ENCODE measurements at regions of chr5 and their contacts with region 1.

Region 1: DNA sequence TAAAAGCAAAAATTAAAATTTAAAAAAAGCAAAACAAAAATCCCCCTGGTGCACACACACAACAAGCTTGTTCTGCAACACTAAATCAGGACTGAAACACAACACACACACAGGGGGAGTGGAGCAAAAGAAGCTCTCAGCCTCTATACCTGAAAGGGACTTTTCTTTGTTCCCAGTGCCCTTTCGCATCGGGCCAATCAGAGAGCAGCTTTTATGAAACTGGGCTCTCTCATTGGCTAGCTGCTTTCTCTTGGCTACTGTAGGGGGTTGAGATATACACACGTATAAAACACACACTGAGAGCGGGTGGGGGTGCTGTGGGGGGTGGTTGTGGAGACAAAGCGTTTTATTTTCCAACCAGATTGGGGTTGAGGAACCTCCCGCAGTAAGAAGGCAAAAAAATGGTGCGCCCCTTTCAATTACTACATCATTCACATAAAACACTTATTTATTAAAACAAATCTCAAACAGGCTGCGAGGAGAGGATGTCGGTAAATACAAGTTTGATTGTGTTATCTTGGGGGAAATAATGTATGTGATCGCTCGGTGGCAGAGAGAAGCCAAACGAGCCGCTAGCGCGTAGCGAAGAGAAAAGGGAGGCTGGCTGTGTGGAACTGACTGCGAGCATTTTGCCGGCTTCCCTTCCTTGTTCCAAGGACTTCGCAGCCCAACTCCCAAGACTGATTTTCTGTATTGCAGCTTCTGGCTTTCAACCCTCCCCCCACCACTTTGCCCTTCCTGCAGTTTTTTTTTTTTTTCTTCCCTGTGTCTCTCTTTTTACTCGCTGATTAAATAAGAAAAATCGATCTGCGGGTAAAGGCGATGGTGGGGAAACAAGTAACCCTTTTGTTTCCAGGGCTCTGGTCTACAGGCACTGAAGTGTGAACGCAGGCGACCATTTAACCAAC is 2.5 kb upstream of the ZNF608 start:
- DNase-seq: peak; percentile 91
- ATAC-seq: peak; percentile 79
- H3K4me3 ChIP-seq: peak overlapping the region; percentile 67
- H3K27ac ChIP-seq: peak overlapping the region; percentile 86
- H3K4me1 ChIP-seq: no peaks in the 10 kb centered on the region
- H3K27me3 ChIP-seq: no peaks in the 10 kb centered on the region
- CTCF ChIP-seq: no peak
- POLR2A ChIP-seq: no peak
- RAD21 ChIP-seq: 0 out of 2 replicates have a peak, but pooled peaks have one; percentile 10

Region 2: GRCh38 chr5:123671042-123671441 is 1077.9 kb before region 1 on chr5:
- CTCF ChIA-PET with region 1: interaction called, 3 read pairs
- POLR2A ChIA-PET with region 1: no interaction called
- dilution Hi-C with region 1: no loop called
- in situ Hi-C with region 1: no loop called
- intact Hi-C with region 1: loop called (anchors 1 kb)
- DNase-seq: peak; percentile 30
- ATAC-seq: no peak; the same call in 1 of the 2 replicates
- H3K4me3 ChIP-seq: no peak overlapping the region
- H3K27ac ChIP-seq: no peak overlapping the region
- H3K4me1 ChIP-seq: peaks cover 4% of the 10 kb centered on the region
- H3K27me3 ChIP-seq: no peaks in the 10 kb centered on the region
- CTCF ChIP-seq: peak; percentile 85
- POLR2A ChIP-seq: 0 out of 2 replicates have a peak, but pooled peaks have one; percentile 35
- RAD21 ChIP-seq: peak; percentile 93

Region 3: DNA sequence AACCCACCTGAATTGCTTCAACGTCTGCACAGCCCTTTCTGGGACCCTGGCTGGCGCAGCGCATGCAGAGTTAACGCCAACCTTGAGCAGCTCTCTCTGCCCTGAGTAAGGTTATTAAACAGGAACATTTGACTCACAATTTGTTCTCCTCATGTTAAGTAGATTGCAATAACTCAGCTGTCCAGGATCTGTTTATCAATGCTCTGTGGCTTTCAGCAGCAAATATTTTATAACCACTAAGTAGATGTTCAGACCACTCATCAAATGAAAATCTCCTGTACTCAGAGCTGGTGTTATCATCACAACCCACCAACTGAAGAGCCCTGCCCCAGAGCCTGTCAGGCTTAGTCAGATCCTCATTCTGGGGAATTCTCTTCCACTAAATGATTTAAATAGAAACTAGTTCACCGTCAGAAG is 405.5 kb before region 1 on chr5:
- CTCF ChIA-PET with region 1: no interaction called
- POLR2A ChIA-PET with region 1: no interaction called
- dilution Hi-C with region 1: no loop called
- in situ Hi-C with region 1: no loop called
- intact Hi-C with region 1: loop called (anchors 5 kb)
- DNase-seq: peak; percentile 95
- ATAC-seq: peak; percentile 98
- H3K4me3 ChIP-seq: no peak overlapping the region
- H3K27ac ChIP-seq: no peak overlapping the region
- H3K4me1 ChIP-seq: 0 out of 2 replicates have a peak, but pooled peaks cover 2% of the 10 kb centered on the region
- H3K27me3 ChIP-seq: peaks cover 3% of the 10 kb centered on the region; the same call in 1 of the 2 replicates
- CTCF ChIP-seq: no peak
- POLR2A ChIP-seq: no peak
- RAD21 ChIP-seq: peak; percentile 16

Region 4: DNA sequence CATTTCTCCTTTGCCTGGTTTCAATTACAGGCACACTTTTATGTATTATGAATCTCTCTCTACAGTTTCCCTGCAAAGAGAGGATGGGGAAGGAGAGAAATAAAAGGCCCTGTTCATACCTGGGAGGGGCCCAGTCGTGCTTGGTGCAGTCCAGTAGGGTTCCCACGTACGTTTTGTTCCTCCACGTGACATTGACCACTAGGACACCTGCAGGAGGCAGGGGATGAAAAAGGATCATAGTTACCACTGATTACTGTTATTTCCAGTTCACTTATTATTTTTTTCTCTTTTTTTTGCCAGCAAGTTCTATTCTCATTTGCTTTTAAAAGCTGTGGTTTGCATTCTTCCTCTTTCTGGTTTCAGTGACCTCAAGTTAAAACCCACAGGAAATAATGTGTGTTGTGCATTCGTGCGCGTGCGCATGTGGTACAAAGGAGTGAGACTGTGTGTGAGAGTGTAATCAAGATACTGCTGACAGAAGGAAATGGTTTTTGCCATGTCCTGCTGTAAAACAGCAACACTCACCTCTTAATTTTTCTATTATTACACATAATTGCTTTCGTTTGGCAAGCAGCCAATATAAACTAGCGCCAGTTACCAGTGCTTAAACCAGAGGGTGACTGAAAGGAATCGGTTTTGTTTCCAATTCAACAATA is 99.3 kb before region 1 on chr5:
- CTCF ChIA-PET with region 1: no interaction called
- POLR2A ChIA-PET with region 1: interaction called, 3 read pairs
- dilution Hi-C with region 1: no loop called
- in situ Hi-C with region 1: no loop called
- intact Hi-C with region 1: loop called (anchors 2 kb)
- DNase-seq: peak; percentile 93
- ATAC-seq: peak; percentile 23; the same call in 1 of the 2 replicates
- H3K4me3 ChIP-seq: no peak overlapping the region
- H3K27ac ChIP-seq: peak overlapping the region; percentile 85
- H3K4me1 ChIP-seq: peaks cover 23% of the 10 kb centered on the region
- H3K27me3 ChIP-seq: no peaks in the 10 kb centered on the region
- CTCF ChIP-seq: no peak
- POLR2A ChIP-seq: no peak
- RAD21 ChIP-seq: 0 out of 2 replicates have a peak, but pooled peaks have one; percentile 8

Region 5: GRCh38 chr5:124707520-124707919 is 41.4 kb before region 1 on chr5:
- CTCF ChIA-PET with region 1: no interaction called
- POLR2A ChIA-PET with region 1: no interaction called
- dilution Hi-C with region 1: no loop called
- in situ Hi-C with region 1: no loop called
- intact Hi-C with region 1: no loop called
- DNase-seq: no peak
- ATAC-seq: no peak
- H3K4me3 ChIP-seq: no peak overlapping the region
- H3K27ac ChIP-seq: no peak overlapping the region
- H3K4me1 ChIP-seq: peaks cover 9% of the 10 kb centered on the region; the same call in 1 of the 2 replicates
- H3K27me3 ChIP-seq: no peaks in the 10 kb centered on the region
- CTCF ChIP-seq: no peak
- POLR2A ChIP-seq: no peak
- RAD21 ChIP-seq: no peak

Region 6: DNA sequence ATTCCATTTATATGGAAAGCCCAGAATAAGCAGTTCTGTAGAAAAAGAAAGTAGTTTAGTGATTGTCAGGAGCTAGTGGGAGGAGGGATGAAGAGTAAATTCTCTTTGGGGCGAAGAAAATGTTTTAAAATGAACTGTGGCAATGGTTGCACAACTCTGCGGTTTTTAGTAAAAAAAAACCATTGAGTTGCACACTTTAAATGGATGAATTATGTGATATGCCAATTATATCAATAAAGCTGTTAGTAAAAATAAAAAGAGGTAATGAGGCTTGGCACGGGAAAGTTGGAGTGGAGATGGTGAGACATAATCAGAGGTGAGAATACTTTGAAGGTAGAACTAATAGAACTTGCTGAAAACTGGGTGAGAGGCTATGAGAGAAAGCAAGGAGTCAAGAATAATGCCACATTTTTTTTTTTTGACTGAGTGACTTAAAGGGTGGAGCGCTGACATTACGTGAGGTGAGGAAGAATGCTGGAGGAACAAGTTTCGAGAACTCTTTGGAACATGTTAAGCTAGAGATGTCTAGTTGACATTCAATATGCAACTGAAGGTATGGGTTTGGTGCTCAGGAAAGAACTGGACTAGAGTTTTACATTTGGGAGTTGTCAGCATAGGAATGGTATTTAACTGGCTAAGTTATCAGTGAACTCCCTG is 192.6 kb after region 1 on chr5:
- CTCF ChIA-PET with region 1: no interaction called
- POLR2A ChIA-PET with region 1: interaction called, 16 read pairs
- dilution Hi-C with region 1: no loop called
- in situ Hi-C with region 1: no loop called
- intact Hi-C with region 1: no loop called
- DNase-seq: no peak
- ATAC-seq: no peak
- H3K4me3 ChIP-seq: no peak overlapping the region
- H3K27ac ChIP-seq: no peak overlapping the region
- H3K4me1 ChIP-seq: no peaks in the 10 kb centered on the region; the same call in 1 of the 2 replicates
- H3K27me3 ChIP-seq: no peaks in the 10 kb centered on the region
- CTCF ChIP-seq: no peak
- POLR2A ChIP-seq: no peak
- RAD21 ChIP-seq: no peak

Region 7: DNA sequence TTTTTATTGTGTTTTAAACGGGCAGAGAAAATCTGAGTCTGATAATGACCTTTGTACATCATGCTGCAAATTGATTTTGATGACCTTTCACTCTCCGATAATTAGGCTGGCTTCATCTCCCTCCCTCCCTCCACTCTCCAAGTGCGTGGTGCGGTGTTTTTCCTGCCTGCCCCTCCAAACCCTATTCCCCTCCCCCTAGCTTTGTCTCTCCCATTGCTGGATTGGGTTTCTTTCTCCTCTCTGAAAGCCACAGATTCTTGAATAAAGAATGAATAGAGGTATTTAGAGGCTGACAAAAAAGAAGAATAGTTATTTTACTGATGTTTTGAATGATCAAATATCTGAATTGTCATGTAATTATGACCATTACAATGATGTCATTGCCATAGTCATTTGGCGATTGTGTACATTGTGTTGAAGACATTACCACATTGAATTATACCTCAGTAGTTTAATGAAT is 568.6 kb after region 1 on chr5:
- CTCF ChIA-PET with region 1: no interaction called
- POLR2A ChIA-PET with region 1: no interaction called
- dilution Hi-C with region 1: no loop called
- in situ Hi-C with region 1: no loop called
- intact Hi-C with region 1: loop called (anchors 5 kb)
- DNase-seq: peak; percentile 16
- ATAC-seq: no peak
- H3K4me3 ChIP-seq: no peak overlapping the region
- H3K27ac ChIP-seq: no peak overlapping the region
- H3K4me1 ChIP-seq: no peaks in the 10 kb centered on the region
- H3K27me3 ChIP-seq: no peaks in the 10 kb centered on the region
- CTCF ChIP-seq: no peak
- POLR2A ChIP-seq: no peak
- RAD21 ChIP-seq: no peak

Region 8: DNA sequence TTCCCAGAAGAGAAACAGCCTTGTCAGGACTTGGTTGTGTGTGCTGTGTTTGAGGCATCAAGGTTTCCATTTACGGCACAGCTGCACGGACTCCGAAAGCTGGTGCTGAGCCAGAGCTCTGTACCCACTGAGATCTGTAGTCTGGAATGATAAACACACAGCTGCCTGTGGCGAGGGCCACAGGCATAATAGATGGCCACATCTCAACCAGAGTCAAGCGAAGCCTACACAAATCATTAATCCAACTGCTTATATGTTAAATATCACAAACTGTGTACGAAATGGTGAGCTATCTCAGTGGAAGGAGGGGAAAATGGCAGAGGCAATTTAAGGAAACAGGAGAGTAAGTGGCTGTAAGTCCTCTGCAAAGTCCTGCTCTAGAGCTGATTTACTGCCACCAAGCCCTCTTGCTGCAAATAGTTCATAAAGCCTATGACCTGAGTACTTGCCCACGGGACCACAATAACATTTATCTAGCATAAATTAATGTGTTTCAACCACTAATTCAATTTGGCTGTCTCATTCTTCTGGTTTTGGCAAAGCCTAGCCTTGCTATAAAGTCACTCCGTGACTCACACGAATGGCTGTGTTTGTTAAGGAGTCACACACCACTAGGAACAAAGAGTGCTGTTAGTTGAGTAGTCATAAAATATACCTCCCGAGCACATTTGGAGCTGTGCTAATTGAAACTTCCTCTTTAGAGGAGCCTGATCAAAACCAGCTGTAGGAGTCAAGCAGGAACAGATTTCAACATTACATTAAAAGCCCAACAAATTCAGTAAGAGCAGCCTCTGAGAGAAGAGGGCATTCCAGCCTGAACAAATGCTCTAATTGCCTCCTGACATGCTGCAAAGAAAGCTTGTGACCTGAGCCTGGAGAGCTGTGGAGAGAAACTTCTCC is 736.1 kb after region 1 on chr5:
- CTCF ChIA-PET with region 1: no interaction called
- POLR2A ChIA-PET with region 1: no interaction called
- dilution Hi-C with region 1: no loop called
- in situ Hi-C with region 1: loop called (anchors 10 kb)
- intact Hi-C with region 1: loop called (anchors 1 kb)
- DNase-seq: peak; percentile 97
- ATAC-seq: peak; percentile 85
- H3K4me3 ChIP-seq: peak overlapping the region; percentile 0; the same call in 1 of the 2 replicates
- H3K27ac ChIP-seq: peak overlapping the region; percentile 87
- H3K4me1 ChIP-seq: peaks cover 9% of the 10 kb centered on the region
- H3K27me3 ChIP-seq: no peaks in the 10 kb centered on the region; the same call in 1 of the 2 replicates
- CTCF ChIP-seq: no peak
- POLR2A ChIP-seq: no peak
- RAD21 ChIP-seq: no peak; the same call in 1 of the 2 replicates

Measured in IMR-90 (cell line).